ENCODE measurements at regions of chr4 and their contacts with region 1.

Region 1: GRCh38 chr4:25749150-25749794 is 93.6 kb downstream of the SLC34A2 start:
- DNase-seq: no peak
- H3K4me3 ChIP-seq: no peak overlapping the region
- H3K27ac ChIP-seq: no peak overlapping the region
- H3K4me1 ChIP-seq: no peaks in the 10 kb centered on the region
- H3K27me3 ChIP-seq: no peaks in the 10 kb centered on the region
- CTCF ChIP-seq: no peak

Region 2: GRCh38 chr4:25271866-25272265 is 477.4 kb before region 1 on chr4:
- CTCF ChIA-PET with region 1: no interaction called
- POLR2A ChIA-PET with region 1: no interaction called
- intact Hi-C with region 1: no loop called
- DNase-seq: no peak
- H3K4me3 ChIP-seq: no peak overlapping the region
- H3K27ac ChIP-seq: no peak overlapping the region
- H3K4me1 ChIP-seq: no peaks in the 10 kb centered on the region
- H3K27me3 ChIP-seq: no peaks in the 10 kb centered on the region
- CTCF ChIP-seq: no peak

Region 3: GRCh38 chr4:25592736-25593135 is 156.5 kb before region 1 on chr4:
- CTCF ChIA-PET with region 1: no interaction called
- POLR2A ChIA-PET with region 1: no interaction called
- intact Hi-C with region 1: loop called (anchors 5 kb)
- DNase-seq: no peak
- H3K4me3 ChIP-seq: no peak overlapping the region
- H3K27ac ChIP-seq: no peak overlapping the region
- H3K4me1 ChIP-seq: no peaks in the 10 kb centered on the region
- H3K27me3 ChIP-seq: no peaks in the 10 kb centered on the region
- CTCF ChIP-seq: no peak

Region 4: DNA sequence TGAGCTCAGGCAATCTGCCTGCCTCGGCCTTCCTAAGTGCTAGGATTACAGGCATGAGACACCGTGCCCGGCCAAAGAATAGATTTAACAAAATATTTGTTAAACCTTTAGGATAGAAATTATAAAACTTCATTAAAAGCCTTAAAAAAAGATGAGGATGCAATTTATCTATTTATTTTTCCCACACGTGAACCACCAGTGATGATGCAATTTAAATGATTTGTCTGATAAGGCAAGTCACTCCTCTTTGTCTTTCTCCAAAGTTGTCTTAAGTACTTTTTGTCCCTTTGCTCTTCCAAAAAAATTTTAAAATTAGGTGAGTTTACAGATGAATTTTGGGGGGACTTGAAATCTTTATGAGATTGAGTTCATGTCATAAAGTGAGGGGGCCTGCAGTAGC is 35.5 kb before region 1 on chr4:
- CTCF ChIA-PET with region 1: no interaction called
- POLR2A ChIA-PET with region 1: interaction called, 12 read pairs
- intact Hi-C with region 1: no loop called
- DNase-seq: no peak
- H3K4me3 ChIP-seq: no peak overlapping the region
- H3K27ac ChIP-seq: no peak overlapping the region
- H3K4me1 ChIP-seq: no peaks in the 10 kb centered on the region
- H3K27me3 ChIP-seq: no peaks in the 10 kb centered on the region
- CTCF ChIP-seq: no peak

Region 5: DNA sequence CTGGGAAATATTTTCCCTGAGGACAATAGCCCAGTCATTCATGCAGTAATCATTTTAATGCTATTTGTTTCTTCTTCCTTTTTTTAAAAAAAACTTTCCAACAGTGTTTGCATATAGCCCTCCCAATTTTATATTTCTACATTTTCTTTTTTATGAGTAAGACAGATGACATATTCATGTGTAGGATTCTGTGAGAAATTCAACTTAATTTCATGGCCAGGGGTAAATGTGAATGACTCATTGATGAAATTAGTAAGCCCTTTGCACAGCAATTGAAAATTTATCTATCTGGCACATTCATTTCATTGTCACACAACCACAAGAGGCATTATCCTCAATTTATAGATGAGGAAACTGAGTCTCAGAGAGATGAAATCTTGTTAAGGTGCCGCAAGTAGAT is 151.0 kb after region 1 on chr4:
- CTCF ChIA-PET with region 1: no interaction called
- POLR2A ChIA-PET with region 1: no interaction called
- intact Hi-C with region 1: no loop called
- DNase-seq: no peak
- H3K4me3 ChIP-seq: no peak overlapping the region
- H3K27ac ChIP-seq: no peak overlapping the region
- H3K4me1 ChIP-seq: peaks cover 10% of the 10 kb centered on the region
- H3K27me3 ChIP-seq: no peaks in the 10 kb centered on the region
- CTCF ChIP-seq: no peak

Measured in A673 (cell line).